Common myeloid progenitor, CD34-positive (primary cell): ENCODE measurements at regions of chr4 and their contacts with region 1.

Region 1: DNA sequence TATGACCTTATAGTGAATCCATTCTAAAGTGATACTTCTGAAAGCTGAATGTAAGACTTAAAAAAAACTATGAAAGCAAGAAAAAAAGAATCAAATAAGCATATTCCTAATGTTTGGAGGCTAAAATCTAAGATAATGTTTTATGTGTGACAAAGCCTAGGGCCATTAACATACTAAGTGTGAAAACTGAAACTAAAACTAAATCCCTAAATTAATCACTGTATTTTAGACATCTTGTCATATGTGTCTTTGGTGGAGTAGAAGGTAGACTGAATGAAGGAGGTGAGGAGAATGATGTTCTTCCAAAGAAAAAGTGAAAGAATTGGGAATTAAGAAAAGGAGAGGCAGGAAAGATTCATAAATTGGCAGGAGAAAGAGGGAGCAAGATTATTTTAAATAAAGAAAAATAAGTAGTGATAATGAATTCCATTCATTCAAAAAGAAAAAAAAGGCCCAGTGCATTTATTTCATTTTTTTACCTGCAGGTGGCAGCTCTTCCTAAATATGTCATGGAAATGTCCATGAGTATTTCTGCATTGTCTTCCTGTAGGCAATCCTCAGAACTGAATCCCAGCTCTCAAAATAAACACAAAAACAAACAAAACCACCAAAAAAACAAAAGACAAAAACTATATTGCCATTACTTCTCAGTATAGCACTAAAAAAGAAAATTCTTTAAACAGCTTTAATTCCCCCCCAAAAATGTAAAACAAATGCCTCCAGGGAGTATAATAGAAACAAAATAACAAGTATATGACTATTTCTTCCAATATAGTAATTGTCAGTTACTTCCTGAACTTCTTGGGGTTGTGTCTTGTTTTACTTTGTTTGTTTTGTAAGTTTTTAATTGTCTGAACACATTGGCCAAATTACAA is 17.0 kb upstream of the AP1AR start:
- DNase-seq: peak; percentile 29 to 48 (median 44)
- H3K4me3 ChIP-seq: no peak overlapping the region
- H3K27ac ChIP-seq: no peak overlapping the region
- H3K4me1 ChIP-seq: no peaks in the 10 kb centered on the region
- H3K27me3 ChIP-seq: no peaks in the 10 kb centered on the region

Region 2: GRCh38 chr4:112199040-112199439 is 15.6 kb before region 1 on chr4:
- CTCF ChIA-PET with region 1: no interaction called
- POLR2A ChIA-PET with region 1: no interaction called
- DNase-seq: no peak
- H3K4me3 ChIP-seq: no peak overlapping the region
- H3K27ac ChIP-seq: no peak overlapping the region
- H3K4me1 ChIP-seq: peaks cover 0 to 3% (median 0%) of the 10 kb centered on the region in 4 experiments
- H3K27me3 ChIP-seq: no peaks in the 10 kb centered on the region

Region 3: DNA sequence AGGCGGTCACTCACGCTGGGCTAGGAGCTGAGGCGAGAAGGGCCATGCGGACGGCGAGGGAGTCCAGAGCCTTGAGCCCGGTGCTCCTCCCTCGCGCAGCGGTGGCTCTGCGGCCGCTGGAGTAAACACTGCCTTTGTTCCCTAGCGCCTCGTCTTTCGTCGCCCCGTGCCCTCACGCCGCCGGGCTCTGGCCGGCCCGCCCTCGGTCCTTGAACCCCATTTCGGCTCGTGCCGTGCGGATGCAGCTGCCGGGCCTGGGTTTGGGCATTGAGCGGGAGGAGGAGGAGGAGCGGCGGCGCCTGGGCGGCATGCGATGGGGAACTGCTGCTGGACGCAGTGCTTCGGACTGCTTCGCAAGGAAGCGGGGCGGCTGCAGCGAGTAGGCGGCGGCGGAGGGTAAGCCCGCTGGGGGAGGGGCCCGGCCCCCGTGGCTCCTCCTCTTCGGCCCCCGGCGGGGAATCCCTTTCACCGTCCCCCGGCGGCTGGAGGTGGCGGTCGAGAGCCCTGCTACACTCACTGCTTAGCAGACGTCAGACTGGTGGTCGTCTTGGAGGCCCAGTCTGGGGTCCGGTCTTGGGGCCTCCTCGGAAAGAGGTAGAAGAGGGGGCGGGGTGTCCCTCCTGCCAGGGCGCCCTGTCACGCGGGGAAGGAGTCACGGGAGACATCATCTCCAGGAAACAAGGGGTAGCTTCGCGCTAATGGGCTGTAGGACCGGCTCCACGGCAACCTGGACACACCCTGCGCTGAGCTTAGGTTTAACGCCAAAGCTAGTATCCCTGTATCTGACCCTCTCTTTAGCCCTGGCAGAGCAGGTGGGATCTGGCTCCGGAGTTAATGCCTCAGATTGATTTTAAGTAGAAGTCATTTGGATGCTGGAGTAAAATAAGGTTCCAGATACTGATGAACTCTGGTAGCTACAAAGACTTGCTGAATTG is 17.4 kb after region 1 on chr4 and contains the start of gene AP1AR:
- CTCF ChIA-PET with region 1: interaction called, 59 read pairs
- POLR2A ChIA-PET with region 1: no interaction called
- DNase-seq: peak; percentile 87 to 91 (median 90)
- H3K4me3 ChIP-seq: peak within 1 kb of the TSS; percentile 77 to 95 (median 89)
- H3K27ac ChIP-seq: peak within 1 kb of the TSS; percentile 79 to 92
- H3K4me1 ChIP-seq: peaks cover 5 to 25% (median 15%) of the 10 kb centered on the region in 4 experiments
- H3K27me3 ChIP-seq: no peaks in the 10 kb centered on the region